IMR-90 (cell line): ENCODE measurements at regions of chr5 and their contacts with region 1.

Region 1: GRCh38 chr5:170861837-170862766 is at the start of gene RANBP17:
- DNase-seq: peak; percentile 67
- ATAC-seq: peak; percentile 88
- H3K4me3 ChIP-seq: peak within 1 kb of the TSS; percentile 93
- H3K27ac ChIP-seq: peak within 1 kb of the TSS; percentile 81
- H3K4me1 ChIP-seq: peaks cover 7% of the 10 kb centered on the region
- H3K27me3 ChIP-seq: no peaks in the 10 kb centered on the region
- CTCF ChIP-seq: peak; percentile 13; the same call in 1 of the 2 replicates
- POLR2A ChIP-seq: peak; percentile 33; the same call in 1 of the 2 replicates
- RAD21 ChIP-seq: peak; percentile 11; the same call in 1 of the 2 replicates
- total RNA-seq, gene RANBP17: 29.0 and 29.7 TPM in 2 replicates

Region 2: DNA sequence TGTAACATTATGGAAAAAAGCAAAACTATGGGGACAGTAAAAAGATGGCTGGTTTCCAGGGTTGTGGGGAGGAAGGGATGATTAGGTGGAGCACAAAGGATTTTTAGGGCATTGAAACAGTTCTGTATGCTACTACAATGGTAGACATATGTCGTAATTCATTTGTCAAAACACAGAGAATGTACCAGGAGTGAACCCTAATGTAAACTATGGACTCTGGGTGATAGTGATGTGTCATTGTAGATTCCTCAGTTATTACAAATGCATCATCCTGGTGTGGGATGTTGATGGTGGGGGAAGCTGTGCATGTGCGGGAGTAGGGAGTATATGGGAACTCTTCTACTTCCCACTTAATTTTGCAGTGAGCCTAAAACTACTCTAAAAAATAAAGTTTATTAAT is 213.6 kb before region 1 on chr5:
- CTCF ChIA-PET with region 1: no interaction called
- POLR2A ChIA-PET with region 1: no interaction called
- dilution Hi-C with region 1: no loop called
- in situ Hi-C with region 1: no loop called
- intact Hi-C with region 1: no loop called
- DNase-seq: peak; percentile 5
- ATAC-seq: no peak
- H3K4me3 ChIP-seq: no peak overlapping the region
- H3K27ac ChIP-seq: no peak overlapping the region
- H3K4me1 ChIP-seq: no peaks in the 10 kb centered on the region
- H3K27me3 ChIP-seq: peaks cover 1% of the 10 kb centered on the region; the same call in 1 of the 2 replicates
- CTCF ChIP-seq: no peak
- POLR2A ChIP-seq: no peak
- RAD21 ChIP-seq: no peak

Region 3: GRCh38 chr5:170818232-170818631 is 43.9 kb before region 1 on chr5:
- CTCF ChIA-PET with region 1: no interaction called
- POLR2A ChIA-PET with region 1: no interaction called
- dilution Hi-C with region 1: no loop called
- in situ Hi-C with region 1: no loop called
- intact Hi-C with region 1: loop called (anchors 1 kb)
- DNase-seq: peak; percentile 71
- ATAC-seq: peak; percentile 81
- H3K4me3 ChIP-seq: no peak overlapping the region
- H3K27ac ChIP-seq: no peak overlapping the region
- H3K4me1 ChIP-seq: no peaks in the 10 kb centered on the region; the same call in 1 of the 2 replicates
- H3K27me3 ChIP-seq: no peaks in the 10 kb centered on the region; the same call in 1 of the 2 replicates
- CTCF ChIP-seq: no peak
- POLR2A ChIP-seq: no peak
- RAD21 ChIP-seq: no peak

Region 4: GRCh38 chr5:170892196-170892595 is 30.1 kb after region 1 on chr5:
- CTCF ChIA-PET with region 1: no interaction called
- POLR2A ChIA-PET with region 1: no interaction called
- dilution Hi-C with region 1: no loop called
- in situ Hi-C with region 1: no loop called
- intact Hi-C with region 1: loop called (anchors 2 kb)
- DNase-seq: peak; percentile 90
- ATAC-seq: peak; percentile 48
- H3K4me3 ChIP-seq: no peak overlapping the region
- H3K27ac ChIP-seq: no peak overlapping the region
- H3K4me1 ChIP-seq: peaks cover 4% of the 10 kb centered on the region; the same call in 1 of the 2 replicates
- H3K27me3 ChIP-seq: no peaks in the 10 kb centered on the region
- CTCF ChIP-seq: no peak
- POLR2A ChIP-seq: no peak
- RAD21 ChIP-seq: no peak

Region 5: DNA sequence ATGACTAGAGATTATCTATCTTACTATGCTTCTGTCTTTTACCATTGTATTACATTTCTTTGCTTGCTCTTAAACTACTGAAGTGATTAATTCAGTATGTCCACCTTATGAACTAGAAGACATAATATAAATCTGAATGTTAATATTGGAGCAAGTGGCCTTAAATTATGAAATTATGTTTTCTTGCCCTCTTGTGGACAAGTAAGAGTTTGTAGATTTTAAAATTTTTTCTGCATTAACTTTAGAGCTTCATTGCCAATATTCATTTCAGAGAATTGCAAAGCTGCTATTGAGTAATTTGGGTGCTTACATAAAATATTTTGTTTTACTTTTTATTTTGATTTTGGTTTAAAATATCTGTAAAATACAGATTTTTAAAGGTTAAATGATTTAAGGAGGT is 55.0 kb after region 1 on chr5:
- CTCF ChIA-PET with region 1: no interaction called
- POLR2A ChIA-PET with region 1: no interaction called
- dilution Hi-C with region 1: no loop called
- in situ Hi-C with region 1: no loop called
- intact Hi-C with region 1: loop called (anchors 2 kb)
- DNase-seq: no peak
- ATAC-seq: no peak
- H3K4me3 ChIP-seq: no peak overlapping the region
- H3K27ac ChIP-seq: no peak overlapping the region
- H3K4me1 ChIP-seq: peaks cover 6% of the 10 kb centered on the region
- H3K27me3 ChIP-seq: no peaks in the 10 kb centered on the region
- CTCF ChIP-seq: peak; percentile 42
- POLR2A ChIP-seq: no peak
- RAD21 ChIP-seq: peak; percentile 23

Region 6: GRCh38 chr5:171074747-171075146 is 212.6 kb after region 1 on chr5:
- CTCF ChIA-PET with region 1: no interaction called
- POLR2A ChIA-PET with region 1: no interaction called
- dilution Hi-C with region 1: no loop called
- in situ Hi-C with region 1: no loop called
- intact Hi-C with region 1: no loop called
- DNase-seq: no peak
- ATAC-seq: no peak
- H3K4me3 ChIP-seq: no peak overlapping the region
- H3K27ac ChIP-seq: no peak overlapping the region
- H3K4me1 ChIP-seq: no peaks in the 10 kb centered on the region
- H3K27me3 ChIP-seq: no peaks in the 10 kb centered on the region
- CTCF ChIP-seq: no peak
- POLR2A ChIP-seq: no peak
- RAD21 ChIP-seq: no peak